ENCODE measurements at regions of chr12 and their contacts with region 1.

Region 1: DNA sequence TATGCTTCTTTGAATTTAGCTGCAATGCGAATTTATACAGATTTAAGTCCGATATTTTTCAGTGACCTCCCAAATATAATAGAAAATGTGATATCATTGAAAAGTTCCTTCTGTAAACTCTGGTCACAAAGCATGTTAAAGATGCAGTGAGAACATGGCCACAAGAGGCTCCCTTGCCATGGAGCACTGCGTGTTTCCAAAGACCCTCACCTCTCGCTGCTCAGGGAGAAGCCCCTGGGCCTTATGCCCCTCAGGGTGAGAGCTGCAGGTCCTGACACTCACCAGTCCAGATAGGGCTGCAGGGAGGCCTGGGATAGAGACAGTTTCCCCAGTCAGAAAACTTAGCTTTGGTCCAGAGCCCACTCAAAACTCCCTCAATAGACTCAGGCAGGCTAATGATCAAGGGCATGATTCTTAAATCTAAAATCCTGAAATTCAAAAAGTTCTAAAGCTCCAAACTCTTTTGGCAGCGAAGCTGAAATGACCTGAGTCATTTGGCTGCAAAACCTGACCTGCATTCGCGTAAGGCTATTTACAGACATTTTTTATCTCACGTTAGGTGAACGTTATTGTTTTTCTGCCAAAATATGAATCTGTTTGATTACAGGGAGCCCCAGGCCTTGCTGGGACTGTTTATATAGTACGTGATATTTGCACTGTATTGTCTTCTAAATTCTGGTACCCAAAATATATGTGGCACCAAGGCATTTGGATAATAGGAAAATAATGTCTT is 67.8 kb downstream of the CAPZA3 start:
- DNase-seq: peak; percentile 19 to 49
- H3K4me3 ChIP-seq: no peak overlapping the region
- H3K27ac ChIP-seq: no peak overlapping the region
- H3K4me1 ChIP-seq: peaks cover 0 to 3% (median 0%) of the 10 kb centered on the region in 4 experiments; a peak in 1 of 7 replicates
- H3K27me3 ChIP-seq: no peaks in the 10 kb centered on the region
- CTCF ChIP-seq: peak; percentile 30 to 59 (median 58); a peak in 3 of 4 replicates
- EP300 ChIP-seq: no peak
- POLR2A ChIP-seq: no peak
- RAD21 ChIP-seq: peak; percentile 70 to 78

Region 2: GRCh38 chr12:18819484-18819883 is 13.8 kb after region 1 on chr12:
- CTCF ChIA-PET with region 1: interaction called, 19 read pairs
- POLR2A ChIA-PET with region 1: no interaction called
- DNase-seq: no peak
- H3K4me3 ChIP-seq: no peak overlapping the region
- H3K27ac ChIP-seq: no peak overlapping the region
- H3K4me1 ChIP-seq: no peaks in the 10 kb centered on the region
- H3K27me3 ChIP-seq: no peaks in the 10 kb centered on the region
- CTCF ChIP-seq: no peak
- EP300 ChIP-seq: no peak
- POLR2A ChIP-seq: no peak
- RAD21 ChIP-seq: no peak

Region 3: DNA sequence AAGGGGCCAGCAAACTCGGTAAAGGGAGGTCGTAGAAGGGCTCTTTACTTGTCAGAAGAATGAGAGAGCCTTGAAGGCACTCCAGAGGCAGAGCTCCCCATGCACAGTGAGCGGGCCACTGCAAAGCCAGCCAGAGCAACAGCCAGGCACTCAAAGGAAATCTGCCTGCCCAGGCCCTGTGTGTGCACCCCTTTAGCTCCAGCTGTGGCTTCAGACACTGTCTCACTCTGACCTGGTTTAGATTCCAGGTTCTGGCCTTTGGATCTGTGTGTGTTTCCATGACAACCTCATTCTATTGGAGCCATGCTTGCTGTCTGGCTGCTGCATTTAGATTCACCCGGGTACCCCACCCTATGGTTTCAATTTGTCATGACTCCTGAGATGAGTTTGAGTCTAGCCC is 102.5 kb after region 1 on chr12:
- CTCF ChIA-PET with region 1: no interaction called
- POLR2A ChIA-PET with region 1: no interaction called
- DNase-seq: no peak
- H3K4me3 ChIP-seq: no peak overlapping the region
- H3K27ac ChIP-seq: no peak overlapping the region
- H3K4me1 ChIP-seq: no peaks in the 10 kb centered on the region
- H3K27me3 ChIP-seq: no peaks in the 10 kb centered on the region
- CTCF ChIP-seq: no peak
- EP300 ChIP-seq: no peak
- POLR2A ChIP-seq: no peak
- RAD21 ChIP-seq: no peak

Region 4: DNA sequence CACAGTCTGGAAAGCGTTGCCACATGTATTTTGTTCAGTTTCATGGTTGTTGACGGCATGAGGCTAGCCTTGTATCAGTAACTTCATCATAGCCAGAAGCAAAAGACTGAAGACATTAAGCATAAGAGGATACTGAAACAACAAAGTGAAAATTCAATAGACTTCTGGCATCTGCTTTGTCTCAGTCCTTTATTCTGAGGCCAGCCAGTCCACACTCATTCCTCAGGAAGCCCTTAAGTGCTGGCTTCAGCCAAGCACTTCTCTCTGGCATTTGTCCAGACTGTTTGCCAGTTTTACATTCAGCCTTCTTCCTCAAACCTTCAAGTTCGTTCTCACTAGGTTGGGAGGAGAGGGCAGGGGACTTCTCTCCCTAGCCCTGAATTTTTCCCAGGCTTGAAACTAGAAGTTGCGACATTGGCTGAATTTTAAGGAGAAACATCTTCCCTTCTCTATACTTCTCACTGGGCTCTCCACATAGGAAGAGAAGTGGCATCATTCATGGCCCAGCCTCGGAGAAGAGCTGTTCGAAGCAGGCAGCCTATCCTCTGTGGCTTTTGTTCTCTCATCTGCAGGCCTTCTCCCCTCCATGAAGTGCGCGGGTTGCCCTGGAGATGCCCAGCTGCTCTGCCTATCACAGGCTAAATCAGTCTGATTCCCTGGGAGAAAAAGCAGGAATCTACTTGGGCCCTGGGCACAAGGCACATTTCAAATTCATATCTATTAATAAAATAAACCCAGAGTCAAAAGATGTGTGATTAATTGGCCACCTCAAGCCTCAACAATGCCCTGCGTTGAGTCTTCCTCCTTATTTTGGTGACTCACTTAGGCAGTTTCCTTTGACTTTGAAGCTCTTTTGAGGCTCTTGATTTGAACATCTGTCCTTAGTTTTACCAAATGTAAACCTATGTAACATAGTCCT is 192.9 kb after region 1 on chr12:
- CTCF ChIA-PET with region 1: no interaction called
- POLR2A ChIA-PET with region 1: no interaction called
- DNase-seq: no peak
- H3K4me3 ChIP-seq: no peak overlapping the region
- H3K27ac ChIP-seq: no peak overlapping the region
- H3K4me1 ChIP-seq: peaks cover 0 to 12% (median 5%) of the 10 kb centered on the region in 4 experiments; a peak in 5 of 7 replicates
- H3K27me3 ChIP-seq: no peaks in the 10 kb centered on the region
- CTCF ChIP-seq: no peak
- EP300 ChIP-seq: no peak
- POLR2A ChIP-seq: no peak
- RAD21 ChIP-seq: no peak